GM12878 (cell line): ENCODE measurements at regions of chr22 and their contacts with region 1.

Region 1: GRCh38 chr22:25645266-25645665 is 80.8 kb downstream of the GRK3 start:
- DNase-seq: no peak
- ATAC-seq: no peak
- H3K4me3 ChIP-seq: no peak overlapping the region
- H3K27ac ChIP-seq: no peak overlapping the region
- H3K4me1 ChIP-seq: peaks cover 13% of the 10 kb centered on the region; the same call in 1 of the 2 replicates
- H3K27me3 ChIP-seq: no peaks in the 10 kb centered on the region
- CTCF ChIP-seq: no peak
- EP300 ChIP-seq: no peak
- POLR2A ChIP-seq: no peak
- RAD21 ChIP-seq: no peak

Region 2: DNA sequence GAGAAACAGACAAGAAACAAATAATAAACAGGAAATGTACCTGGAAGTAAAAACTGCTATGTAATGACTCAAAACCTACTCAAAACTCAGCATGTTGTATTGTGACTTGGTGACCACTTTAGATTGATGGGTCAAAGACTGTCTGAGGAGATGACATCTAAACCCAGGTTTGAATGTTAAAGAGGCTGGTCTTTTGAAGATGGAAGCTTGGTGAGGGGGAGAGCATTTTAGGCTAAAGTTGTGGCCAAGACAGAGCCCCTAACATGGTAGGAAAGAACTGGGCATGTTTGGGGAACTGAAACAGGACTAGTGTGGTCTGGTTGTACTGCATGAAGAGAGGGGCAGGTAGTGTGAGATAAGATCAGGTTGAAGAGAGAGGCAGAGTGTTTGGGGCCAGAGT is 11.5 kb after region 1 on chr22:
- CTCF ChIA-PET with region 1: interaction called, 4 read pairs
- POLR2A ChIA-PET with region 1: interaction called, 4 read pairs
- RAD21 ChIA-PET with region 1: interaction called, 12 read pairs
- SMC1A ChIA-PET with region 1: interaction called, 58 read pairs
- in situ Hi-C with region 1: no loop called
- intact Hi-C with region 1: no loop called
- DNase-seq: peak; percentile 77
- ATAC-seq: peak; percentile 99
- H3K4me3 ChIP-seq: no peak overlapping the region
- H3K27ac ChIP-seq: peak overlapping the region; percentile 70
- H3K4me1 ChIP-seq: peaks cover 13% of the 10 kb centered on the region
- H3K27me3 ChIP-seq: no peaks in the 10 kb centered on the region
- CTCF ChIP-seq: no peak
- EP300 ChIP-seq: peak in 1 of 2 experiments; percentile 65; a peak in 2 of 4 replicates
- POLR2A ChIP-seq: no peak
- RAD21 ChIP-seq: no peak

Region 3: DNA sequence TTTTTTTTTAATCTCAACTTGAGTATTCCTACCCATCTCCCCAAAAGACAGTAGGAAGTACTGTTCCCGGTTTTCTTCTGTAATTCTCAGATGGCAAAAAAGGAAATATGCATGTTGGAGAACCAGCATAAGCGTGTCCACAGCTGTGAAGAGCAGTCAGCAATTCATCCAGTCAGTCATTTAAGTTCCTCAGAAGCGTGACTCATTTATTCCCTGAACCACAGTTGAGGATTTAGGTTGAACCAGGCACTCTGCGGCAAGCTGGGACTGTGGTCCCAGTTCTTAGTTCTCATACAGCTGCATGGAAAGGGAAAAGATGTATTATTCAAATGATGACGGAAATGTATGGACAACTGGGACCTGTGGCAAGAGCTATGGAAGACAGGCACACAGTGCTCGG is 35.7 kb after region 1 on chr22:
- CTCF ChIA-PET with region 1: no interaction called
- POLR2A ChIA-PET with region 1: no interaction called
- RAD21 ChIA-PET with region 1: no interaction called
- SMC1A ChIA-PET with region 1: no interaction called
- in situ Hi-C with region 1: no loop called
- intact Hi-C with region 1: no loop called
- DNase-seq: no peak
- ATAC-seq: no peak
- H3K4me3 ChIP-seq: no peak overlapping the region
- H3K27ac ChIP-seq: no peak overlapping the region
- H3K4me1 ChIP-seq: no peaks in the 10 kb centered on the region
- H3K27me3 ChIP-seq: no peaks in the 10 kb centered on the region
- CTCF ChIP-seq: no peak
- EP300 ChIP-seq: no peak
- POLR2A ChIP-seq: no peak
- RAD21 ChIP-seq: no peak